Adrenal gland (tissue), 19 donors: ENCODE measurements at regions of chr17 and their contacts with region 1.

Region 1: DNA sequence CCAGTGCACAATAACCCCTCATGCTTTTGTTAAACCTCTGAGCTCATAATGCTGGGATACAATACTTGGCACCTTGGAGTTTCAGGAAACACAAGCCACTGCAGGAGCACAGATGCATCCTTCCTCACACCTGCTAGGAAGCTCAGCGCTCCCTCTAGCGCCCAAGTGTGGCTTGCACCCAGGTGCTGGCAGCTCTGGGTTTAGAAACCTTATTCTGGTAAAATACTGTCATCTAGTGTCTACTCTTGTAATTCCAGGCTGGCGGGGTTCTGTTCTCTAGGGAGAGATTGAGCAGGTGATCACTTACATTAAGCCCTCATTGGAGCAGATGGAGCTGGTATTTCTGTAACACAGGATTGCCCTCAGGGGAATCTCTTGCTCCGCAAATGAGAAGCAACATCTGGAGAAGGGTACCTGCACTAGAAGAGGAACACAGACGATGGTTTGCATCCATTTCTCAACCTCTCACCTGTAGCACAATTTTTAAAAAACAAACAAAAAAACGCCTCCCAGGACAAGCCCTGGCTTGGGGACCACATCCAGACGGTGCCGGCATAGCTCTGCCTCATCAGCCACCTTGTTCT is 1.5 kb downstream of the CCL1 start:
- DNase-seq: peak; percentile 85 to 96 (median 87)
- H3K4me3 ChIP-seq: no peak overlapping the region
- H3K27ac ChIP-seq: no peak overlapping the region
- H3K4me1 ChIP-seq: peaks cover 0 to 3% of the 10 kb centered on the region in 2 donors
- H3K27me3 ChIP-seq: no peaks in the 10 kb centered on the region
- CTCF ChIP-seq: peak; percentile 97 to 100 (median 100)
- POLR2A ChIP-seq: no peak

Region 2: DNA sequence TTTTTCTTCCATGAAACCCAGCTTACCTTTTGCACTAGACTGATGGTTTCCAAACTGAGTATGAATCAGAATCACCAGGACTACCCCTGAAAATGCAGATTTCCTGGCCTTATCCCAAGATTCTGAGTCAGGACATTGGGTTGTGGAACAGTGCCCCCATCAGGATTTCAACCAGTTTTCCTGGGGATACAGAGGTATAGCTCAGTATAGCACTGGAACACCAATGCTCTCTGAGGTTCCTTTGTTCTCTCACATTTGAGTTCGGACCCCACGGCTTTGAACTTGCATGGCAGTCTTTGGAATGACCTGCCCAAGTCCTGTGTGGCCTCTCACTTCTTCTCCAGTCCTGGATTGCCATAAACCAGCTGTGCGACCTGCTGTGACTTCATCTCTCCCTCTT is 55.1 kb before region 1 on chr17:
- intact Hi-C with region 1: loop called in 1 of 2 experiments (anchors 5 kb)
- DNase-seq: peak; percentile 34 to 70 (median 58)
- H3K4me3 ChIP-seq: no peak overlapping the region
- H3K27ac ChIP-seq: no peak overlapping the region
- H3K4me1 ChIP-seq: peaks cover 0 to 4% of the 10 kb centered on the region in 2 donors
- H3K27me3 ChIP-seq: no peaks in the 10 kb centered on the region
- CTCF ChIP-seq: peak; percentile 25 to 89 (median 72)
- POLR2A ChIP-seq: no peak